Esophagus muscularis mucosa (tissue), 4 donors: ENCODE measurements at regions of chr1 and their contacts with region 1.

Region 1: GRCh38 chr1:108828022-108828961 is 28.6 kb downstream of the AKNAD1 start:
- DNase-seq: peak; percentile 95
- H3K4me3 ChIP-seq: peak overlapping the region; percentile 31 to 45 (median 36)
- H3K27ac ChIP-seq: peak overlapping the region; percentile 88 to 92 (median 90)
- H3K4me1 ChIP-seq: peaks cover 26 to 61% (median 57%) of the 10 kb centered on the region in 4 donors
- H3K27me3 ChIP-seq: no peaks in the 10 kb centered on the region
- CTCF ChIP-seq: peak; percentile 77 to 83 (median 78)
- EP300 ChIP-seq: peak; percentile 46
- POLR2A ChIP-seq: no peak

Region 2: GRCh38 chr1:108877348-108878159 is 49.3 kb after region 1 on chr1:
- intact Hi-C with region 1: loop called (anchors 5 kb)
- DNase-seq: peak; percentile 87
- H3K4me3 ChIP-seq: peak overlapping the region; percentile 73 to 98 (median 89)
- H3K27ac ChIP-seq: peak overlapping the region; percentile 82 to 92 (median 91)
- H3K4me1 ChIP-seq: peaks cover 0 to 40% (median 33%) of the 10 kb centered on the region in 4 donors
- H3K27me3 ChIP-seq: no peaks in the 10 kb centered on the region
- CTCF ChIP-seq: no peak
- EP300 ChIP-seq: no peak
- POLR2A ChIP-seq: no peak

Region 3: GRCh38 chr1:108897865-108898720 is 69.8 kb after region 1 on chr1:
- intact Hi-C with region 1: loop called (anchors 1 kb)
- DNase-seq: no peak
- H3K4me3 ChIP-seq: no peak overlapping the region
- H3K27ac ChIP-seq: peak overlapping the region; percentile 67 to 74 (median 72)
- H3K4me1 ChIP-seq: peaks cover 0 to 34% (median 32%) of the 10 kb centered on the region in 4 donors
- H3K27me3 ChIP-seq: no peaks in the 10 kb centered on the region
- CTCF ChIP-seq: peak; percentile 73 to 77 (median 75)
- EP300 ChIP-seq: no peak
- POLR2A ChIP-seq: no peak